Ovary (tissue), 10 donors: ENCODE measurements at regions of chr15 and their contacts with region 1.

Region 1: GRCh38 chr15:70650567-70651302 is 112.6 kb downstream of the UACA start:
- DNase-seq: no peak
- H3K4me3 ChIP-seq: no peak overlapping the region
- H3K27ac ChIP-seq: no peak overlapping the region
- H3K4me1 ChIP-seq: no peaks in the 10 kb centered on the region
- H3K27me3 ChIP-seq: no peaks in the 10 kb centered on the region
- CTCF ChIP-seq: no peak
- EP300 ChIP-seq: no peak
- POLR2A ChIP-seq: no peak

Region 2: DNA sequence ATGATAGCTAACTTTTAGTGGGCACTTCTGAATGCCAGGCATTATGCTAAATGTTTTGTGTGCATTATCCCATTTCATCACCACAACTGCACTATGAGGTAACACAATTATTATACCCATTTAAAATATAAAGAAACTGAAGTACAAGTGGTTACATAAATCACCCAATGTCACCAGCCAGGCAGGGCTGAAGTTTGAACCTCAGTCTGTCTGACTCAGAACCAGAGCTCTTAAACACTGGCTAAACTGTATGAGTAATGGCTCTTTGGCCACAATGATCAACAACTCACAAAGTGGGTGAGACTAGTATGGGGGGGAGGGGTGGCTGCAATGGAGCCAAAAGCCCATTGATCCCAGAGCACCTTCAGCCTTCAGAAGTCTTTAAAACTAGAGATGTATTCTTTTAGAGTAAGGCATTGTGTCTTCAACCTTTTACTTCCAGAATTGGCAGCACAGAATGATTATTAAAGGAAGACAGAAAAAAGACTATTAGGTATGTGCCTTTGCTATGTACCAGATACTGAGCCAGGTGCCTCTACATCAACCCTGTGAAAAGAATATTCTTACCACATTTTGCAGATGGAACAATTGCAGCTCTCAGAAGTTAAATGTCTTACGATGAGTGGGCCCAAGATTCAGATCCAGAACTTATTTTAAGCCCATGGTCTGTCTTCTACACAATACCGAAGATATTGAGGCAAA is 54.2 kb before region 1 on chr15:
- intact Hi-C with region 1: loop called in 1 of 4 experiments (anchors 10 kb)
- DNase-seq: no peak
- H3K4me3 ChIP-seq: no peak overlapping the region
- H3K27ac ChIP-seq: no peak overlapping the region
- H3K4me1 ChIP-seq: no peaks in the 10 kb centered on the region
- H3K27me3 ChIP-seq: no peaks in the 10 kb centered on the region
- CTCF ChIP-seq: no peak
- EP300 ChIP-seq: no peak
- POLR2A ChIP-seq: no peak

Region 3: DNA sequence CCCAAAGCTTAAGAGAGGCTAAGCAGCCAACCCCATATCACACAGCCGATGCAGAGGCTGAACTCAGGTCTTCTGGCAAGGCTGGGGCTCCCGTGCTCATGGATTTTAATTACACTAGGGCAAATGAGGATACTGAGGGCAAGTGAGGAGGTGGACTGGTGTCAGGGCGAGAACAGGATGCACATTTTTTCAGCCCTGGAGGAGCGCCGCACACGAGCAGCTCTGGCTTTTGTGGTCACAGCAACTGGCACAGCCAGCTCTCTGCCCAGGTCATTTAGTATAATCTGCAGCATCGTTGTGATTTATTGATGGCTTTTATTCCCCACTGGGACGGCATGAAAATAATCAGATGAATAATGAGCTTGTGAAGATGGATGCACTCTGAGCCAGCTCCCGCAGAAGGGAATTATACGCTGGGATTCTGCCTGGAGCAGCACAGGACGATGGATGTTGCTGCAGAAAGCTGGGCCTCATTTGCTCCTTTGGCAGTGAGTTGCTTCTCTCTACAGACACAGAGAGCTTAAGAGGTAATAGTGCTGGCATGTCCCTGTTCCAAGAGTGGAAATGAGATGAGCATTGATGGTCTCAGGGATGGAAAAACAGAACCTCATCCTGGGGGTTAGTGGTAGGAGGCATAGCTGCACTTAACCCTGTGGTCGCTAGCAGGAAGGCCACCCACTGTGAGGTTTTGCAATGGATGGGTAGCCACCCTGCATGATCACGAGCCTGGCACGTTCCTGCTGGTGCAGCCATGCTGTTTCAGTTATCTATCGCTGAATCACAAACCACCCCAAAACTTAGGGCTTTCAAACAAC is 22.8 kb before region 1 on chr15:
- intact Hi-C with region 1: loop called in 1 of 4 experiments (anchors 2 kb)
- DNase-seq: no peak
- H3K4me3 ChIP-seq: no peak overlapping the region
- H3K27ac ChIP-seq: no peak overlapping the region
- H3K4me1 ChIP-seq: no peaks in the 10 kb centered on the region
- H3K27me3 ChIP-seq: no peaks in the 10 kb centered on the region
- CTCF ChIP-seq: no peak
- EP300 ChIP-seq: no peak
- POLR2A ChIP-seq: no peak

Region 4: DNA sequence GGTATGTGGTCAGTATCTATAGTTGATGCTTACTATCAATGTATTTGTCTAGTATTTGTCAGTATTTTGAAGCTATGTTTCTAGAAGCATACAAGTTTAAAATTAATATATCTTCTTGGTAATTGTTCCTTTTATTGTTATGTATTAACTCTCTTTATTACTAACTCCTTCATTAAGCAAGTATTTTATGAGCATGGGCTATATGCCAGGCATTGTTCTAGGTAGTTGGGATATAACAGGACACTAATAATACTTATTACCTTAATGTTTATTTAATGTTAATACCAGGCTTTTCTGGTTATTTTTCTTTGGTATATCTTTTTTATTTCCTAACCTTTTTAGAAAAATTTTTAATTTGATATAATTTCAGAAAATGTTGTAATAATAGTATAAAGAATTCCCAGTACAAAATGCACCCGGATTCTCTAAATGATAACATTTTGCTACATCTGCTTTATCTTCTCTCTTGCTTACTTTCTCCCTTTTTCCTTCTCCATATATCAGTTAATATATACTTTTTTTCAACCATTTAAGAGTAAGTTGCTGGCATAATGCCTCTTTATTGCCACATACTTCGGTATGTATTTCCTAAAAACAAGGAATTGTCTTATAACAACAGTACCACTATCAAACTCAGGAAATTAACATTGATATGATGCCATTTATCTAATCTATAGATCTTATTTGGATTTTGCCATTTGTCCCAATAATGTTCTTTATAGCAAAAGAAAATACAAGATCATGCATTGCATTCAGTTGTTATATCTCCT is 272.8 kb after region 1 on chr15:
- intact Hi-C with region 1: no loop called
- DNase-seq: no peak
- H3K4me3 ChIP-seq: no peak overlapping the region
- H3K27ac ChIP-seq: no peak overlapping the region
- H3K4me1 ChIP-seq: no peaks in the 10 kb centered on the region
- H3K27me3 ChIP-seq: no peaks in the 10 kb centered on the region
- CTCF ChIP-seq: no peak
- EP300 ChIP-seq: no peak
- POLR2A ChIP-seq: no peak